IMR-90 (cell line): ENCODE measurements at regions of chr1 and their contacts with region 1.

Region 1: GRCh38 chr1:212152308-212152693 is 116.8 kb downstream of the DTL start:
- DNase-seq: no peak
- ATAC-seq: no peak
- H3K4me3 ChIP-seq: no peak overlapping the region
- H3K27ac ChIP-seq: no peak overlapping the region
- H3K4me1 ChIP-seq: no peaks in the 10 kb centered on the region
- H3K27me3 ChIP-seq: no peaks in the 10 kb centered on the region
- CTCF ChIP-seq: no peak
- POLR2A ChIP-seq: no peak
- RAD21 ChIP-seq: no peak

Region 2: DNA sequence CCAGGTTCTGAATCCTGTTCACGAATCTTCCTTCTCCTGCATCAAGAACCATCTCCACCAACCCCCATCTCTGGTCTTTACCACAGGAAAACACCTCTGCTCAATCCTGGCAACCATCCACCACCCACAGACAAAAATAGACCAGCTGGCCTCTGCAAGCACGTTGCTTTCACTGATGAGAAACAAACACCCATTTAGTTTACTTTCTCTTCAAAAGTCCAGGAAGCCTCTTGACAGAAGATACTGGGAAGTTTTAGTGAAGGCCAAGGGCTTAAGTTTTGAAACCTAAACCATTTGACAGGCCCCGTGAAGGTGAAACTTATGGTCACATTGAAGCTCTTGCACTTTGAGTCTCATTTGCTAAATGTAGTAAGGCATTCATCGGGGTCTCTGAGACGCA is 10.3 kb after region 1 on chr1:
- CTCF ChIA-PET with region 1: no interaction called
- POLR2A ChIA-PET with region 1: no interaction called
- dilution Hi-C with region 1: no loop called
- in situ Hi-C with region 1: no loop called
- intact Hi-C with region 1: loop called (anchors 2 kb)
- DNase-seq: peak; percentile 80
- ATAC-seq: peak; percentile 27
- H3K4me3 ChIP-seq: no peak overlapping the region
- H3K27ac ChIP-seq: no peak overlapping the region
- H3K4me1 ChIP-seq: peaks cover 12% of the 10 kb centered on the region
- H3K27me3 ChIP-seq: no peaks in the 10 kb centered on the region
- CTCF ChIP-seq: no peak
- POLR2A ChIP-seq: no peak
- RAD21 ChIP-seq: no peak

Region 3: GRCh38 chr1:212247179-212247721 is 94.9 kb after region 1 on chr1:
- CTCF ChIA-PET with region 1: no interaction called
- POLR2A ChIA-PET with region 1: no interaction called
- dilution Hi-C with region 1: no loop called
- in situ Hi-C with region 1: no loop called
- intact Hi-C with region 1: no loop called
- DNase-seq: peak; percentile 79
- ATAC-seq: peak; percentile 93
- H3K4me3 ChIP-seq: no peak overlapping the region
- H3K27ac ChIP-seq: no peak overlapping the region
- H3K4me1 ChIP-seq: peaks cover 4% of the 10 kb centered on the region; the same call in 1 of the 2 replicates
- H3K27me3 ChIP-seq: no peaks in the 10 kb centered on the region; the same call in 1 of the 2 replicates
- CTCF ChIP-seq: no peak
- POLR2A ChIP-seq: no peak
- RAD21 ChIP-seq: no peak